Posterior vena cava (tissue), 2 donors: ENCODE measurements at regions of chr4 and their contacts with region 1.

Region 1: GRCh38 chr4:26320538-26321325 is at the start of gene RBPJ:
- DNase-seq: peak; percentile 97
- total RNA-seq, gene RBPJ: 78.4 to 116 TPM

Region 2: GRCh38 chr4:26161030-26161824 is 159.5 kb before region 1 on chr4:
- intact Hi-C with region 1: loop called in 1 of 2 experiments (anchors 5 kb)
- DNase-seq: no peak

Region 3: DNA sequence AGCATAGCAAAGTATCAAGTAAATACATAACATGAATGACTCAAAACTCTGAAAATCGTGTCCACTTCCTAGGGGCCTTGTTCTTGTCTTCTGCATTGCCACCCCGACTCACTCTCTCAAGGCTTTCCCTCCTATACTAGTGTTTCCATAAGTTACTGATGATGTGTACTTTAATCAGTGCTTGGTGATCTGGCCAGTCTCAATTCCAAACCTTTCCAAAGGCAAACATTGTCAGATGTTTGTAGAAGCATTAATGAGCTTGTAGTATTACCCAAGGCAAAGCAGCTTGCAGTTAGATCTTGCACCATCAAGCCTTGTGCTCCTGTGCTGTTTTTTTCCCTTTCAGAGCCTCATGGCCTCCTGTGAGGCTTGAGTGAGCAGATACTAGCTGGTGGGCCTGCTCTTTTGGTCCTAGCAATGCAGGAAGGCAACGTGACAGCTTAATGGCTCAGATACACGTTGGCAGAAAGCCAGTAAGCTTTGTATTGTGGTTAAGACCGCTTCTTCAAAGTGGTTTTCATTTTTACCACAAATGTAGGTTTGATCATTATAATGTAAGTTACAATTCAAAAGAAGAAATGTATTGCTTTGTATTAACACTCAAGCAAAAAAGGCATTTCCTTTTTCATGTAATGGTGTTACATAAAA is 51.9 kb after region 1 on chr4:
- intact Hi-C with region 1: no loop called
- DNase-seq: no peak

Region 4: DNA sequence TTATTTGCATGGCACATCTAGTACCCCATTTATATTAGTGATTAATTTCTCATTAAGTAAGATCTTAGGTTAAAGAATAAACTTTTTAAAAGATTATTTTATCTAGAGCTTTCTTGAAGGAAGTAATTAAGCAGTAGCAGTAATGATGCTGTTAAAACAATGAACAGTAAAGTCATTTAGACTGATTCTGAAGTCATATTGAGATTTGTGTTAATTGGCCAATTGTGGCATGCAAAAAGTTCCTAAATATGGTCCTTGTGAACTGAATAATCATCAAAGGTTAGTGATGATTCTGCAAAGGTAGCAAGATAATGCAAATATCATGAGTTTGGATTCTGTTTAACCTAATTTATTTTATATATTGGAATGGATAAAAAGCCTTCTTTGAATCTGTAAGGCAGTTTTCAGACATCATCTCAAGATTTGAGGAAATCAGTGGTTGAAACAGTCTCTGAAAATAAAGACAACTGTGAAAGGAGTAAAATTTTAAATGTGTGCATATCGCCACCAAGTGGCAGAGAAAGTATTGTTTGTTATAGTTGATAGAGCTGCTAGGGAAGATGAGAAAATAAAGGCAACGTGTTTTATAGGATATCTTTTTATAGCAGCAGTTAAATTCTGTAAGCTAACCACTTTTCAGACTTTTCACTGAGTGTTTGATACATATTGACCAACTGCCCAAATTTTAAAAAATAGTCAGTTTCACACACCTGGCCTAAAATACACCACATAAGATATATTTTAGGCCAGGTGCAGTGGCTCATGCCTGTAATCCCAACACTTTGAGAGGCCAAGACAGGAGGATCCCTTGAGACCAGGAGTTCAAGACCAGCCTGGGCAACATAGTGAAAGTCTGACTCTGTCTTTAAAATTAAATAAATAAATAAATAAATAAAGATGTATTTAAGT is 89.9 kb after region 1 on chr4:
- intact Hi-C with region 1: loop called in 1 of 2 experiments (anchors 5 kb)
- DNase-seq: no peak